ENCODE measurements at regions of chr6 and their contacts with region 1.

Region 1: DNA sequence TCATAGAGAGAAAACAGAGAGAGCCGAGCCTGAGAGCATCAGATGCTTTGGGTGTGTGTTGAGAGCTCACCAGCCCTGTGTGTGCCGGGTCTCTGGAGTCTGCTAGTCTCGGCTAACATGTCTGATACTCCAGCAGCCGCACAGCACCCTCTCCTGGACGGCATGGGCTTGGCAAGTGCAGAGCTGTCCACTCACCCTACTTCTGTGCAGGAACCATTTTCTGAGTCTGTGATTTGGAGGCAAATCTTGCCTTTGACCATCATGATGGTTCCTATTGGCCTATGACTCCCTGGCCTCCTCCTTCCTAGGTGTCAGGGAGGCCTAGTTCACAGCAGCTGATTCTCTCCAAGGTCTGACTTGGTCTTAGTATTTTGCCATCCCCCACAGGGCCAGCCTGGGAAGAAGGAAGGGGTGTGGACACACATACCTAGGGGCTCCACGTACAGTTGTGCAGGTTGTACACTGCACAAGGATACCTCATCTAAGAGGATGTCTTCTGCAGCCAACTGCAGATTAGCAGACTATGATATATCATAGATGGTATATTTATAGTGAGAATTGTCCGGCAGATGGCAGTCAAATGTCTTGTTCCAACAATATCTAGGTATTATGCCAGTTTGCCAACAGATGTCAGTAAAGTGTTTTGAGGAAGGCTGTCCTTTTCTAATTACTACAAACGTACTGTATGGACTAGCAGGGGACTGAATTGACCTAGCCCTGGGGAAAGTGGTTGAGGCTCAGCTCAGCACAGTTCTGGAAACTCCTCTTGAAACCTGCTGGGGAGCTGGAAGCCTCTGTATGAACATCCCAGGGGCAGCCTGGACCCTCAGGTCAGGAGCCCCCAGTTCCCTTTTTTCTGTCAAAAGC is 13.0 kb downstream of the FGD2 start:
- DNase-seq: peak; percentile 96
- ATAC-seq: peak; percentile 95
- H3K4me3 Mint-ChIP-seq: peak overlapping the region; percentile 26
- H3K27ac Mint-ChIP-seq: peak overlapping the region; percentile 66
- H3K4me1 Mint-ChIP-seq: peaks cover 40% of the 10 kb centered on the region
- H3K27me3 Mint-ChIP-seq: no peaks in the 10 kb centered on the region
- CTCF ChIP-seq: peak; percentile 99

Region 2: DNA sequence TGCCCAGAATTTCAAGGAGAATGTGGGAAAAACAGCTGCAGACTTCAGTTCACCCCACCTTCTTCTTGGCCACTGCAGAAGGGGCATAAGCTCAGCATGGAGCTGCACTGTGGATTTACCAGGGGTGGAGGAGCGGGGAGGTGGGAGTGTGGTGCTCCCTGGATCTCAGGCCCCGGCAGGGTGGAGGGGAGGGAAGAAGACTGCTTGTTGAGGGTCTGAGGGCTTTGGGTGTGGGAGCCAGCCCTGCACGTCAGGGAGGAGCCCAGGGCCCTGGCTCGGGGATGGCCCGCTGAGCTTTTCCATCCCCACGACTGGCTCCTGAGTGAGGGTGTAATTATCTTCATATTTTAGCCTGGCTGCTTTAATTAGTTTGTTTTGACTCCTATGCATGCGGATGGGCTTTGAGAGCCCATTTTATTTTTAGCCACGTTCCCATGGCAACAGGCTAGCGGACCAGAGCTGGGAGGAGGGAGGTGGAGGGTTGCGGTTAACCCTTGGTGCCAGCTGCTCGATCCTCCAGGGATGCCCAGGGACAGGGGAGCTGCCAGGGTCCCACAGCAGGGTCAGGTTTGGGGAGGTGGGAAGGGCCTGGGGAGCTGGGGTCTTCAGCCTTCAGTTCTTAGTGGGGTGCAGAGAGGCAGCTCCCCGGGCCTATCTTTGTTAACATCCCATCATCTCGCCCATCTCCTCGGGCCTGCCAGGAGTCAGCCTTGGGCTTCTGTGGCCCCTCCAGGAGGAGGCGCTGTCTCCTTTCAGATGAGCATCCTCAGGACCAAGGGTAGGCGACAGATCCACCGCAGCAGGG is 252.6 kb before region 1 on chr6:
- CTCF ChIA-PET with region 1: interaction called, 126 read pairs
- POLR2A ChIA-PET with region 1: interaction called, 3 read pairs
- intact Hi-C with region 1: loop called (anchors 2 kb)
- DNase-seq: peak; percentile 90
- ATAC-seq: peak; percentile 88
- H3K4me3 Mint-ChIP-seq: no peak overlapping the region
- H3K27ac Mint-ChIP-seq: no peak overlapping the region
- H3K4me1 Mint-ChIP-seq: peaks cover 31% of the 10 kb centered on the region
- H3K27me3 Mint-ChIP-seq: no peaks in the 10 kb centered on the region
- CTCF ChIP-seq: peak; percentile 87

Region 3: DNA sequence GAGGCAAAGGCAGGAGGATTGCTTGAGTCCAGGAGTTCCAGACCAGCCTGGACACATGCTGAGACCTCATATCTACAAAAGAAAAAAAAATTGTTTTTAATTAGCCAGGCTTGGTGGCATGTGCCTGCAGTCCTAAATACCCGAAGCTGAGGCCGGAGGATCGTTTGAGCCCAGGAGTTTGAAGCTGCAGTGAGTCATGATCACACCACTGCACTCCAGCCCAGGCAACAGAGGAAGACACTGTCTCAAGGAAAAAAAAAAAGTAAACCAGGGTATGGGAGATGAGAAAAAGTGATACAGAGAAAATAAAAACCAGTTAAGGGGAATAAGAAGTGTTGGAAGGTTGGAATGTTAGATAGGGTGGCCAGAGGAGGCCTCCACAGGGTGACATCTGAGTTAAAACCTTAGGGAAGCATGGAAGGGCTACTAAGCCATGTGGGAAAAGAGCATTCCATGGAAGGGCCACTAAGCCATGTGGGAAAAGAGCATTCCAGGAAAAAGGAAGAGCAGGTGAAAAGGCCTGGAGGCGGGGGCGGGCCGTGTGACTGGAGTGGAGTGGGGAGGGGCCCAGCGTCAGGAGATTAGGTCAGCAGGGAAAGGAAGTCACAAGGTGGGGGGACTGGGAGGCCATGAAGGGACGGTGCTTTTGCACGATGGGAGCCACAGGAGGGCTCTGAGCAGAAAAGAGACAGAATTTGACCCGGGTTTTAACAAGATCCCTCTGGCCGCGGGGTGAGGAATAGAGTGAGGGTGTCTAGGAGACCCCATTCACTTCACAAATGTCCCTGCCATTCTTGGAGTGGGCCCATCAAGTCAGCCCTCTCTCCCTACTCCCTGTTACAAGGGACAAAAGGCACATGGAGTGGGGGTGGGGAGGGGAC is 197.5 kb before region 1 on chr6:
- CTCF ChIA-PET with region 1: no interaction called
- POLR2A ChIA-PET with region 1: no interaction called
- intact Hi-C with region 1: no loop called
- DNase-seq: no peak
- ATAC-seq: no peak
- H3K4me3 Mint-ChIP-seq: no peak overlapping the region
- H3K27ac Mint-ChIP-seq: no peak overlapping the region
- H3K4me1 Mint-ChIP-seq: no peaks in the 10 kb centered on the region
- H3K27me3 Mint-ChIP-seq: no peaks in the 10 kb centered on the region
- CTCF ChIP-seq: no peak

Region 4: DNA sequence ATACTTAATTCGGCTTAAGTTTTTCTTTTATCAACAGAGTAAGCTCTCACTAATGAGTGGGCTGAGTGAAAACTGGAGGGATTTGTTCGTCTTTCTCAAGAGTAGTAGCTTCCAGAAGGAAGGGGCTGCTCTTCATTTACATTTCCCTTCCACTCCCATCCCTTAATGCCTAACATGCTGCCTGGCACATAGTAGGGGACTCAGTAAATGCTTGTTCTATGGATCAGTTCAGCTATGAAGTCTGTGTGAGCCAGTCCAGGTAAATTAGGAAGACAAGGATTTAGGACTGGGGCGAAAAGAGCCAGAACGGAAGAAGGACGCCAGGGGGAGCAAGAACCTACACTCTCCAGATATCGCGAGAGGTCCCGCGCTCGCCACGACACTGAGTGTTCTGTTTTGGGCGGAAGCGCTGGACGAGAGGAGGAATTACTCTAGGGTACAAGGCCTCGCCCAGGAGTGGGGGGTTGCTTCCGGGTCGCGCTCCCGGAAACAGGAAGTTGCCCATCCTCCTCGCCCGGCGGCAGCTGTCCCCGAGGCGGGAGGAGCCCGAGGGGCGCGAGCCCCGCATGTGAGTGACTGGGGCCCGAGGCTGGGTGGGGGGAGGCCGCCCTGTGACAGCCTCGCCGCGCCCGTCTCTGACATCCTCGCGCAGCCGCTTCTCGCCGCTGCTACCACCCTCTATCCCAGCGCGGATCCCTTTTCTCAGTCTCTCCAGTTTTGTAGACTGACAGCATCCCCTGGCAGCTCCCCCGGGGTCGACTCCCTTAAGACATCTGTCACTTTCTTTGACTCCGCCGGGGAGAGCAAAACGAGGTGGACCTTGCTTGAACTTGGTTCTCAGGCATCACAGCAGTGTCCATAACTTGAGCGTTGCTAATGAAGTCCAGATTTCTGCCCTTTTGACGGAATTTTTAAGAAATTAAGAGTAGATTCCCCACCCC is 132.7 kb before region 1 on chr6 and contains the start of gene C6orf89:
- CTCF ChIA-PET with region 1: interaction called, 108 read pairs
- POLR2A ChIA-PET with region 1: interaction called, 9 read pairs
- intact Hi-C with region 1: loop called (anchors 5 kb)
- DNase-seq: peak; percentile 99
- ATAC-seq: peak; percentile 99
- H3K4me3 Mint-ChIP-seq: peak within 1 kb of the TSS; percentile 94
- H3K27ac Mint-ChIP-seq: peak within 1 kb of the TSS; percentile 96
- H3K4me1 Mint-ChIP-seq: peaks cover 35% of the 10 kb centered on the region
- H3K27me3 Mint-ChIP-seq: no peaks in the 10 kb centered on the region
- CTCF ChIP-seq: peak; percentile 79
- total RNA-seq, gene C6orf89: 24.7 to 29.8 TPM

Region 5: GRCh38 chr6:36985808-36986703 is 32.4 kb before region 1 on chr6 and contains the start of gene MTCH1:
- CTCF ChIA-PET with region 1: interaction called, 31 read pairs
- POLR2A ChIA-PET with region 1: interaction called, 8 read pairs
- intact Hi-C with region 1: no loop called
- DNase-seq: peak; percentile 85
- ATAC-seq: peak; percentile 82
- H3K4me3 Mint-ChIP-seq: peak within 1 kb of the TSS; percentile 99
- H3K27ac Mint-ChIP-seq: peak within 1 kb of the TSS; percentile 95
- H3K4me1 Mint-ChIP-seq: peaks cover 17% of the 10 kb centered on the region
- H3K27me3 Mint-ChIP-seq: peaks cover 1% of the 10 kb centered on the region
- CTCF ChIP-seq: no peak
- total RNA-seq, gene MTCH1: 96.5 to 100 TPM

Region 6: GRCh38 chr6:37169496-37170272 is 151.3 kb after region 1 on chr6 and contains the start of gene PIM1:
- CTCF ChIA-PET with region 1: interaction called, 502 read pairs
- POLR2A ChIA-PET with region 1: interaction called, 124 read pairs
- intact Hi-C with region 1: loop called (anchors 2 kb)
- DNase-seq: peak; percentile 100
- ATAC-seq: peak; percentile 80
- H3K4me3 Mint-ChIP-seq: peak within 1 kb of the TSS; percentile 93
- H3K27ac Mint-ChIP-seq: peak within 1 kb of the TSS; percentile 98
- H3K4me1 Mint-ChIP-seq: peaks cover 37% of the 10 kb centered on the region
- H3K27me3 Mint-ChIP-seq: no peaks in the 10 kb centered on the region
- CTCF ChIP-seq: no peak
- total RNA-seq, gene PIM1: 293 to 305 TPM

Region 7: DNA sequence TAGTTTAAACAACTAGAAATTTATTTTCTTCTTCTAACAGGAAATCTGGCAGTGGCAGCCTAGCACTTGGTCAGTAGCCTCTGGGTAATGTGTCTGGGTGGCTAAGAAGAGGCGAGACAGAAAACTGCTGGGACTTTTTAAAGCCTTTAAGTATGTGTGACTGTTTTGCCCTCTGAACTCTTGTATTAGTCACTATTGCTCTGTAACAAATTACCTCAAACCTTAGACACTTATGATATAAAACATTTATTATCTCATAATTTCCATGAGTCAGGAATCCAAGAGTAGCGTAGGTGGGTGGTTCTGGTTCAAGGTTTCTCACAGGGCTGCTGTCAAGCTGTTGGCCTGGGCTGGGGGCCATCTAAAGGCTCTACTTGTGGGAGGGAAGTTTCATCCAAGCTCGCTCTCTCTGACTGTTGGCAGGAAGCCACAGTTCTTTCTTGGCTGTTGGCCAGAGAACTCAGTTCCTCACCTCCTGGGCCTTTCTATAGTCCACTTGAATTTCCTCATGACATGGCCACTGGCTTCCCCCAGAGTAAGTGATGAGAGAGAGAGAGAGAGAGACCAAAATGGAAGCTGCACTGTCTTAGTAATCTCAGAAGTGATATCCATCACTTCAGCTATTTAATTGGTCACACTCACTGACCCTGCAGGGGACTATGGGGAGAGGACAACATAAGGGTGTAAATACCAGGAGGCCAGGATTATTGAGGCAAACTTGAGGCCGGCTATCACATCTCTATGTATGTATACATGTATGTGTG is 221.7 kb after region 1 on chr6:
- CTCF ChIA-PET with region 1: interaction called, 11 read pairs
- POLR2A ChIA-PET with region 1: interaction called, 3 read pairs
- intact Hi-C with region 1: no loop called
- DNase-seq: peak; percentile 94
- ATAC-seq: peak; percentile 93
- H3K4me3 Mint-ChIP-seq: no peak overlapping the region
- H3K27ac Mint-ChIP-seq: peak overlapping the region; percentile 73
- H3K4me1 Mint-ChIP-seq: peaks cover 41% of the 10 kb centered on the region
- H3K27me3 Mint-ChIP-seq: no peaks in the 10 kb centered on the region
- CTCF ChIP-seq: no peak

Measured in activated CD8-positive, alpha-beta T cell treated with anti-CD3 and anti-CD28 coated beads for 36 hours (primary cell).